Panc1 (cell line): ENCODE measurements at regions of chr22 and their contacts with region 1.

Region 1: GRCh38 chr22:36781656-36782627 is 6.0 kb upstream of the IFT27 start:
- DNase-seq: no peak
- ATAC-seq: peak; percentile 94
- H3K4me3 ChIP-seq: no peak overlapping the region
- H3K27ac ChIP-seq: no peak overlapping the region
- H3K4me1 ChIP-seq: peaks cover 4% of the 10 kb centered on the region; the same call in 1 of the 2 replicates
- H3K27me3 ChIP-seq: no peaks in the 10 kb centered on the region
- CTCF ChIP-seq: peak; percentile 90

Region 2: GRCh38 chr22:36702842-36703215 is 79.1 kb before region 1 on chr22:
- CTCF ChIA-PET with region 1: interaction called, 10 read pairs
- POLR2A ChIA-PET with region 1: no interaction called
- in situ Hi-C with region 1: no loop called
- intact Hi-C with region 1: no loop called
- DNase-seq: no peak
- ATAC-seq: 0 out of 2 replicates have a peak, but pooled peaks have one; percentile 33
- H3K4me3 ChIP-seq: peak overlapping the region; percentile 27 to 30
- H3K27ac ChIP-seq: no peak overlapping the region
- H3K4me1 ChIP-seq: peaks cover 5% of the 10 kb centered on the region; the same call in 1 of the 2 replicates
- H3K27me3 ChIP-seq: peaks cover 4% of the 10 kb centered on the region
- CTCF ChIP-seq: no peak

Region 3: GRCh38 chr22:36856121-36856791 is 74.3 kb after region 1 on chr22:
- CTCF ChIA-PET with region 1: interaction called, 3 read pairs
- POLR2A ChIA-PET with region 1: no interaction called
- in situ Hi-C with region 1: no loop called
- intact Hi-C with region 1: loop called (anchors 2 kb)
- DNase-seq: peak; percentile 64
- ATAC-seq: peak; percentile 95
- H3K4me3 ChIP-seq: 0 out of 4 replicates have a peak overlapping the region, but pooled peaks of 1 of the 2 experiments have one; percentile 18
- H3K27ac ChIP-seq: no peak overlapping the region
- H3K4me1 ChIP-seq: no peaks in the 10 kb centered on the region
- H3K27me3 ChIP-seq: no peaks in the 10 kb centered on the region
- CTCF ChIP-seq: peak; percentile 99

Region 4: DNA sequence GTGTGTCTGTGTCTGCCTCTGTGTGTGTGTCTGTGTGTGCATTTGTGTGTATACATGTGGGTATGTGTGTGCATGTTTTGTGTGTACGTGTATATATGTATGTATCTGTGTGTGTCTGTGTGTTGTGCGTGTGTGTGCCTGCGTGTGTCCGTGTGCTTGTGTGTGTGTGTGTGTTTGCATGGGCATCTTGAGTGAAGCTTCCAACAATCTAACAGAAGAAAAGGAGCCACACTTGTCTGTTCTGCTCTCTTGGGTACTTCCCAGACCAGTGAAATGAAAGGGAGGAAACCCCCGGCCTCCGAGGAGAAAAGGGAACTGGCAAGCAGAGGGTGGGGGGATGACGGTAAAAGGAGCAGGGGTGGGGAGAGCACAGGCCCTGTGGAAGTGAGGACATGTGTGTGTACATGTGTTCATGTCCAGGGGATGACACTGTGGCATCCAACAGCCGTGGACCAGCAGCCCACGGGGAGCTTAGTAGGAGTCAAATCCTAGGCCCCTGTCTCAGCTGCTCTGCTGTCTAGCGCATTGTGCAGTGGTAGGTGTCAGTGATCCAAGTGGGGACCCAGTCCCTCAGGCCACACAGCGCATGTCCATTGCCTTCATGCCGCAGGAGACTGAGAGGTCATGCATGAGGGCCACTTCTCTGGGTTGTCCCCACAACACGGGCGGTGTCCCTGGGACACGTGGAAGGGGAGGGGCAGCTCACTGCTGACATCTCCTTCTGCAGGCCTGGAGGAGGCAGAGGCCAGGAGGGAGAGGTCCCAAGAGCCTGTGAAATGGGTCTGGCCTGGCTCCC is 139.6 kb after region 1 on chr22:
- CTCF ChIA-PET with region 1: no interaction called
- POLR2A ChIA-PET with region 1: no interaction called
- in situ Hi-C with region 1: no loop called
- intact Hi-C with region 1: no loop called
- DNase-seq: no peak
- ATAC-seq: no peak
- H3K4me3 ChIP-seq: no peak overlapping the region
- H3K27ac ChIP-seq: no peak overlapping the region
- H3K4me1 ChIP-seq: no peaks in the 10 kb centered on the region
- H3K27me3 ChIP-seq: peaks cover 2% of the 10 kb centered on the region; the same call in 1 of the 2 replicates
- CTCF ChIP-seq: no peak